ENCODE measurements at regions of chr10 and their contacts with region 1.

Region 1: DNA sequence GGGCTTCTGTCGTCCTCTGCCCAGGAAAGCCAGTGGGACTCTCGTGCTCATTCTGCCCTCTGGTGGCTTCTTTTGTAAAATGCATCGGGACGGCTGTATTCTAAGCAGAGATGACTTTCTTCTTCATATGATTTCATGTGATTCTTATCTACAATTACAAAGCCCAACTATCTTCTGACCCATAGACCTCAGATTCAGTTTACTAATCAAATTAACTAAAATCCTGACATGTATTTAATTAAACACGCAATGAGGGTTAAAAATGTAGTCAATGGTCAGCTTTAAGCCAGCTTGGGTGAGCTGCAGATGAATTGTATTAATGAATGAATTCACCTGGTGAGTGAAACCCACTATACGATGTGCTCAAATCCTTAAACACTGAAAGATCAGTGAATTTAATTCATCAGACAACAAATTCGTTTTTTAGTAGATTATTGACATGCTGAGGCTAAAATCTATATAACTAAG is 117.6 kb upstream of the FAM204A start:
- DNase-seq: peak; percentile 66
- H3K4me3 Mint-ChIP-seq: no peak overlapping the region
- H3K27ac Mint-ChIP-seq: no peak overlapping the region
- H3K4me1 Mint-ChIP-seq: peaks cover 4% of the 10 kb centered on the region
- H3K27me3 Mint-ChIP-seq: peaks cover 18% of the 10 kb centered on the region

Region 2: GRCh38 chr10:118341791-118342637 is 117.7 kb before region 1 on chr10 and contains the start of gene FAM204A:
- CTCF ChIA-PET with region 1: no interaction called
- DNase-seq: peak; percentile 97
- H3K4me3 Mint-ChIP-seq: peak within 1 kb of the TSS; percentile 85
- H3K27ac Mint-ChIP-seq: peak within 1 kb of the TSS; percentile 87
- H3K4me1 Mint-ChIP-seq: peaks cover 33% of the 10 kb centered on the region
- H3K27me3 Mint-ChIP-seq: peaks cover 3% of the 10 kb centered on the region

Region 3: DNA sequence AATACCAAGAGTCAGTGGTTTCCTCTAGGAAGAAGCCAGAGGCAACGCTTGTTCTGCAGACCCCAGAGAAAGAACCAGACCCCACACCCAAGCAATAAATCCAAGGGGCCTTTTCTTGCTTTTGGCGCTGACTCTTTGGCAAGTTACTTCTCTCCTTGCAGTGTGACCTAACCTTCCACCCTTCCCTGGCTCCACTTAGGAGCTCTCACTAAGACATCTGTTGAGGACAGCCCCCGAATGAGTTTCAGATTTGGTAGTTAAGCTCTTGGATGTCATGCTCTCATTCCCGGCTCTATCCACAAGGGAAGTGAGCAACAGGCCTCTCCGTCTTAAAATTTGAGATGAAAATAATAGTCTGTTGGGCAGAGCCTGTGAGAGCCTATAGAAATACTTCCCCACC is 67.0 kb before region 1 on chr10:
- CTCF ChIA-PET with region 1: no interaction called
- DNase-seq: no peak
- H3K4me3 Mint-ChIP-seq: no peak overlapping the region
- H3K27ac Mint-ChIP-seq: no peak overlapping the region
- H3K4me1 Mint-ChIP-seq: peaks cover 4% of the 10 kb centered on the region
- H3K27me3 Mint-ChIP-seq: peaks cover 16% of the 10 kb centered on the region

Region 4: DNA sequence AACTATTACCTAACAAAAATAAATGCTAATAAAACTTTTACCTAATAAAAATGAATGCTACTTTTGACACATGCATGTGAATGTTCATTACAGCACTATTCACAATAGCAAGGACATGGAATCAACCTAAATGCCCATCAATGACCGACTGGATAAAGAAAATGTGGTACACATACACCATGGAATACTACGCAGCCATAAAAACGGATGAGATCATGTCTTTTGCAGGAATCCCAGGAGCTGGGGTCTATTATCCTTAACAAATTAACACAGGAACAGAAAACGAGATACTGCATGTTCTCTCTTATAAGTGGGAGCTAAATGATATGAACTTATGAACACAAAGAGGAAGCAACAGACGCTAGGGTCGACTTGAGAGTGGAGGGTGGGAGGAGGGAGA is 29.6 kb before region 1 on chr10:
- CTCF ChIA-PET with region 1: interaction called, 13 read pairs
- DNase-seq: no peak
- H3K4me3 Mint-ChIP-seq: no peak overlapping the region
- H3K27ac Mint-ChIP-seq: no peak overlapping the region
- H3K4me1 Mint-ChIP-seq: no peaks in the 10 kb centered on the region
- H3K27me3 Mint-ChIP-seq: peaks cover 4% of the 10 kb centered on the region

Region 5: GRCh38 chr10:118543714-118544400 is 84.1 kb after region 1 on chr10:
- CTCF ChIA-PET with region 1: interaction called, 17 read pairs
- DNase-seq: peak; percentile 67
- H3K4me3 Mint-ChIP-seq: no peak overlapping the region
- H3K27ac Mint-ChIP-seq: no peak overlapping the region
- H3K4me1 Mint-ChIP-seq: no peaks in the 10 kb centered on the region
- H3K27me3 Mint-ChIP-seq: peaks cover 59% of the 10 kb centered on the region

Region 6: GRCh38 chr10:118638680-118639079 is 178.9 kb after region 1 on chr10:
- CTCF ChIA-PET with region 1: no interaction called
- DNase-seq: no peak
- H3K4me3 Mint-ChIP-seq: no peak overlapping the region
- H3K27ac Mint-ChIP-seq: no peak overlapping the region
- H3K4me1 Mint-ChIP-seq: no peaks in the 10 kb centered on the region
- H3K27me3 Mint-ChIP-seq: peaks cover 23% of the 10 kb centered on the region